ENCODE measurements at regions of chr1 and their contacts with region 1.

Region 1: DNA sequence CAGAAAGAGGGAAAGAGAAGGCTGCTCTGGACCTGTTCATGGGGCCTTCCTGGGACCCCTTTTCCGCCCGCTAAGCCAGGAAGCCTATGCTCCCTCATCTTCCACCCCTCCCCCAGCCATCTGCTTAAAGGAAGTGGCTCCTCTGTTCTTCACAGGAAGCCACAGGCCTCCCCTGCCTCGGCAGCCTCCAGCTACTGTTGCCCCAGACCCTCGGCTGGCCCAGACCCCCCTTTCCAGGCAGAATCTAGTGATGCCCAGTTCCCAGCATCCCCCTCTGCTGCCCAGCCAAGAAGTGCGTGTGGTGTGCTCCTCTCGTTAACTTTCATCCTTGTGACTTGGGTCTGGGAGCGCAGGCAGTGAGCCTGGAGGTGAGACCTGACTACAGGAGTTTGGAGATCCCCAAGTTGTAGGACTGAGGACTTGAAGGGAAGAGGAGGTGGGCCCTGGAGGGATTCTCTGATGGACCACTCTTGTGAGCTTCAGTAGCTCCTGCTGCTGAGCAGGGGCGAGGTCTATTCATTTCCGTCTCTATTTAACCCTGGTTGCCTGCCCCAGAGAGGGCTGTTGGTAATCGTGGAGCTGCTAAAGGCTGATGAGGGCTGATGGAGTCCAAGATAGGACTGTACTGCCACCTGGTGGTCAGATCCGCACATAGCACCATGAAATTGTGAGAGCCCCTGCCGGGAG is 9.1 kb downstream of the IFI6 start:
- DNase-seq: peak; percentile 76 to 94 (median 88)
- ATAC-seq: peak; percentile 80
- H3K4me3 ChIP-seq: peak overlapping the region; percentile 64
- H3K4me3 Mint-ChIP-seq: peak overlapping the region; percentile 82 to 94 (median 90)
- H3K27ac ChIP-seq: peak overlapping the region; percentile 81
- H3K27ac Mint-ChIP-seq: peak overlapping the region; percentile 95 to 100 (median 98)
- H3K4me1 ChIP-seq: peaks cover 38 to 46% of the 10 kb centered on the region in 2 donors
- H3K4me1 Mint-ChIP-seq: peaks cover 39 to 62% (median 48%) of the 10 kb centered on the region in 7 donors
- H3K27me3 ChIP-seq: no peaks in the 10 kb centered on the region
- H3K27me3 Mint-ChIP-seq: no peaks in the 10 kb centered on the region

Region 2: DNA sequence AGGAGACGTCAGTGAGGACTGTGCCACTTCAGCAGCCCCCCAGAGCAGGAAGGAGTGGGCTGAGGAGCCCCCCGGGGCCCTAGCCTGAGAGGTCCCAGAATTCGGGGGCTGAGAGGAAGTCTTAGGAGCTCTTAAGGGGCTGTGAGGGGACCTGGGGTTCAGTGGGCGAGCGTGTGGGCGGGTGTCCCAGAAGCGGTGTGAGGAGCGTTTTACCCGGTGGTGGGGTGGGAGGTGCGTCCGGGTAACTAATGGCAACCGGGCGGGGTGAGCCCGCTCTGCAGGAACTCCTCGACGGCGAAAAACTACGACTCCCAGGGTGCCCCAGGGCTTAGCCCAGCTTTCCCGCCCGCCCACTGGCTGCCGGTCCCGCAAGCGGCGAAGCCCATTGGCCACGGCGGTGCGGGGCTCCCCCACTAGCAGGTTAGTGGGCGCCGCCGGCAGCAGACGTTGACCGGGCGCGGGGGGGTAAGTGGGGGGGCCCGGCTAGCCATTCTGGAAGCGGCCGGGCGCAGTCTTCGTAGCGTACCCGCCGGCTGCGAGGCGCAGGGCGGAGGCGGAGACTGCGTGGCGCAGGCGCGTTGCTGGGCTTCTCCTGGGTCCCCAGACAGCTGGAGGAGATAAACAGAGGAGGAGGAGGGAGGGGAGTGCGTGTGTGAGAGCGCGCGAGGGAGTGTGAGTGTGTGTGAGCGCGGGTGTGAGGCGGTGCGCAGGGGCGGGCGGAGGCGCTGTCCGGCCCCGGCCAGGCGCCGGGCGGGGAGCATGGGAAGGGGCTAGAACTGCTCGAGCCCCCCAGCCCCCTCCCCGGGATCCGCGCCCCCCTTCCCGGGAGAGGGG is 428.6 kb before region 1 on chr1 and contains the start of gene WDTC1:
- CTCF ChIA-PET with region 1: no interaction called
- POLR2A ChIA-PET with region 1: no interaction called
- intact Hi-C with region 1: loop called in 1 of 2 experiments (anchors 10 kb)
- DNase-seq: peak; percentile 91 to 98 (median 97)
- ATAC-seq: peak; percentile 96
- H3K4me3 ChIP-seq: peak within 1 kb of the TSS; percentile 78
- H3K4me3 Mint-ChIP-seq: peak within 1 kb of the TSS; percentile 95 to 100 (median 98)
- H3K27ac ChIP-seq: peak within 1 kb of the TSS; percentile 78
- H3K27ac Mint-ChIP-seq: peak within 1 kb of the TSS; percentile 83 to 97 (median 96)
- H3K4me1 ChIP-seq: peaks cover 18 to 25% of the 10 kb centered on the region in 2 donors
- H3K4me1 Mint-ChIP-seq: peaks cover 25 to 39% (median 35%) of the 10 kb centered on the region in 7 donors
- H3K27me3 ChIP-seq: no peaks in the 10 kb centered on the region
- H3K27me3 Mint-ChIP-seq: peaks cover 0 to 3% (median 0%) of the 10 kb centered on the region in 5 donors
- total RNA-seq, gene WDTC1: 33.2 to 59.0 (median 46.3) TPM

Region 3: GRCh38 chr1:27392096-27392777 is 270.6 kb before region 1 on chr1 and contains the start of gene GPR3:
- CTCF ChIA-PET with region 1: interaction called, 7 read pairs
- POLR2A ChIA-PET with region 1: interaction called, 3 read pairs
- intact Hi-C with region 1: loop called (anchors 1 to 2 kb)
- DNase-seq: peak; percentile 82 to 95 (median 88)
- ATAC-seq: peak; percentile 97
- H3K4me3 ChIP-seq: peak within 1 kb of the TSS; percentile 57
- H3K4me3 Mint-ChIP-seq: peak within 1 kb of the TSS; percentile 76 to 90 (median 83)
- H3K27ac ChIP-seq: peak within 1 kb of the TSS; percentile 64
- H3K27ac Mint-ChIP-seq: peak within 1 kb of the TSS; percentile 54 to 98 (median 84)
- H3K4me1 ChIP-seq: peaks cover 9 to 18% of the 10 kb centered on the region in 2 donors
- H3K4me1 Mint-ChIP-seq: peaks cover 12 to 27% (median 20%) of the 10 kb centered on the region in 7 donors
- H3K27me3 ChIP-seq: no peaks in the 10 kb centered on the region
- H3K27me3 Mint-ChIP-seq: peaks cover 0 to 16% (median 0%) of the 10 kb centered on the region in 5 donors
- total RNA-seq, gene GPR3: 0.24 to 0.93 (median 0.45) TPM in 3 of 5 experiments, not detected in the others

Region 4: GRCh38 chr1:27489910-27490741 is 172.7 kb before region 1 on chr1 and contains the start of gene WASF2:
- CTCF ChIA-PET with region 1: no interaction called
- POLR2A ChIA-PET with region 1: interaction called, 6 read pairs
- intact Hi-C with region 1: loop called in 1 of 2 experiments (anchors 1 kb)
- DNase-seq: peak; percentile 91 to 99 (median 97)
- ATAC-seq: peak; percentile 98
- H3K4me3 ChIP-seq: peak within 1 kb of the TSS; percentile 100
- H3K4me3 Mint-ChIP-seq: peak within 1 kb of the TSS; percentile 89 to 99 (median 96)
- H3K27ac ChIP-seq: peak within 1 kb of the TSS; percentile 88
- H3K27ac Mint-ChIP-seq: peak within 1 kb of the TSS; percentile 97 to 100 (median 99)
- H3K4me1 ChIP-seq: peaks cover 14 to 19% of the 10 kb centered on the region in 2 donors
- H3K4me1 Mint-ChIP-seq: peaks cover 21 to 46% (median 42%) of the 10 kb centered on the region in 7 donors
- H3K27me3 ChIP-seq: no peaks in the 10 kb centered on the region
- H3K27me3 Mint-ChIP-seq: no peaks in the 10 kb centered on the region
- total RNA-seq, gene WASF2: 136 to 177 (median 145) TPM

Region 5: DNA sequence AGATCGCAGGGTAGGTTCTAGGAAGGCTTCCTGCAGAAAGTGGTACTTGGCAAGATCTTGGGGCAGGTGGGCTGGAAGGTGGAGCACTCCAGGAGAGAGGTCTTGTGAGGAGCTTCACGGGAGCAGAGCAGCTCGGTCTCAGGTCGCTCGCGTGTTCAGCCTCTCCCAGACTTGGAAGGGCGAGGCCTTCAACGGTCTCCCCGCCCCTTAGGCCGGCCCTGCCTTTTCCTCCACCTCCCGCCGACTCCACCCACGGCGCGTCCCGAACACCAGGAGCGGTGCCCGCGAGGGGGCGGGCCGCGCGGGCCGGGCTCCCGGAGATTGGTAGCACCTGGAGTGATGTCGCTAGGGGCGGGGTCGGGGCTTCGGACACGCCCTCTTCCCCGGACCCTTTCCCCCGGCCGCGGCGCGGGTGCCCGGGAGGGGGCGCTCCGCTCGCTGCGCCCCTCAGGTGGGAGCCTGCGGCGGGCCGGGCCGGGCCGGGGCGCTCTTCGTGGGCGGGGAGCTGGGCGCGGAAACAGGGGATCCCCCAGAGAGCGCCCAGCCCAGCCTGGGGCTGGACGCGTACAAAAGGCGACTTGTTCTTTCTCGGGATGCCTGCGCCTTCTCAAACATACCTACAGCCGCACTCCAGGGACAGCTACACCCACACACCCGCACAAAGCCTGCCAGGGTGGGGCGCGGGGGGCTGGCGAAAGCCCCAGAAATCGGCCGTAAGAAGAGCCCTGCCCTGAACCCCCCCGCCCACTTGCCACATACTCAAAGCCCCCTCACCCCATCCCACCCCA is 94.4 kb before region 1 on chr1:
- CTCF ChIA-PET with region 1: interaction called, 5 read pairs
- POLR2A ChIA-PET with region 1: no interaction called
- intact Hi-C with region 1: loop called (anchors 1 kb)
- DNase-seq: peak; percentile 87 to 96 (median 91)
- ATAC-seq: peak; percentile 96
- H3K4me3 ChIP-seq: peak overlapping the region; percentile 51
- H3K4me3 Mint-ChIP-seq: peak overlapping the region; percentile 55 to 88 (median 78)
- H3K27ac ChIP-seq: peak overlapping the region; percentile 68
- H3K27ac Mint-ChIP-seq: peak overlapping the region; percentile 64 to 93 (median 83)
- H3K4me1 ChIP-seq: peaks cover 7 to 19% of the 10 kb centered on the region in 2 donors
- H3K4me1 Mint-ChIP-seq: peaks cover 15 to 57% (median 51%) of the 10 kb centered on the region in 7 donors
- H3K27me3 ChIP-seq: no peaks in the 10 kb centered on the region
- H3K27me3 Mint-ChIP-seq: no peaks in the 10 kb centered on the region

Region 6: DNA sequence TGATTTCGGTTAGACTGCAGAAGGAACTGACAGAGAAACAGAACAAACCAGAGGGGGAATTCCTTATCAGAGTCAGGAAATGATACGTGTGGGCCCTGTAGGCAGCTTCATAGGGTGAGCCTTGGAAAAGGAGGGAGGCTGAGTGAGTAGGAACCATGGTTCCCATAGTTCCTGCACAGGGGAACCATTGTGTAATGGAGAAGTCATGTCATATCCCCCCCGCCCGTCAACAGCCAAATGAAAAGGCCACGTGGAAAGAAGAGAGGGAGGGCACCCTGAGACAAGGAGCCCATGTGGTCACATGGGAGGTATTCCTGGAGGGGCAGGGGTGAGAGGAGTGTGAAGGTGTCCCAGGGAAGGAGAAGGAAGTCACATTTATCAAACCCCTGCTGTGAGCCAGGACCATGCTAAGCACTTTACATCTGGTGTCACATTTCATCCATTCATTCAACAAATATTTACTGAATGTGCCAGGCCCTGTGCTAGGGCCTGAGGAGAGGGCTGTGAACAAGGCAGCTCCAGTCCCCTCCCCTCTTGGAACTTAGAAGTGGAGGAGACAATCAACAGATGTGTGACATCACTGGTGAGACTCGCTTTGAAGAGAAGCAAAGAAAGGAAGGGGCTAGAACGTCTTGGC is 12.2 kb before region 1 on chr1:
- CTCF ChIA-PET with region 1: interaction called, 109 read pairs
- POLR2A ChIA-PET with region 1: interaction called, 57 read pairs
- intact Hi-C with region 1: no loop called
- DNase-seq: no peak
- ATAC-seq: peak; percentile 78
- H3K4me3 ChIP-seq: no peak overlapping the region
- H3K4me3 Mint-ChIP-seq: peak overlapping the region in 1 of 10 donors; percentile 12
- H3K27ac ChIP-seq: no peak overlapping the region
- H3K27ac Mint-ChIP-seq: peak overlapping the region in 6 of 9 donors; percentile 42 to 85 (median 62)
- H3K4me1 ChIP-seq: no peaks in the 10 kb centered on the region
- H3K4me1 Mint-ChIP-seq: peaks cover 10 to 45% (median 20%) of the 10 kb centered on the region in 7 donors
- H3K27me3 ChIP-seq: no peaks in the 10 kb centered on the region
- H3K27me3 Mint-ChIP-seq: no peaks in the 10 kb centered on the region

Region 7: GRCh38 chr1:27804791-27805190 is 141.9 kb after region 1 on chr1:
- CTCF ChIA-PET with region 1: no interaction called
- POLR2A ChIA-PET with region 1: no interaction called
- intact Hi-C with region 1: no loop called
- DNase-seq: no peak
- ATAC-seq: no peak
- H3K4me3 ChIP-seq: no peak overlapping the region
- H3K4me3 Mint-ChIP-seq: no peak overlapping the region
- H3K27ac ChIP-seq: no peak overlapping the region
- H3K27ac Mint-ChIP-seq: peak overlapping the region in 1 of 9 donors; percentile 20
- H3K4me1 ChIP-seq: no peaks in the 10 kb centered on the region
- H3K4me1 Mint-ChIP-seq: no peaks in the 10 kb centered on the region
- H3K27me3 ChIP-seq: no peaks in the 10 kb centered on the region
- H3K27me3 Mint-ChIP-seq: no peaks in the 10 kb centered on the region

Region 8: DNA sequence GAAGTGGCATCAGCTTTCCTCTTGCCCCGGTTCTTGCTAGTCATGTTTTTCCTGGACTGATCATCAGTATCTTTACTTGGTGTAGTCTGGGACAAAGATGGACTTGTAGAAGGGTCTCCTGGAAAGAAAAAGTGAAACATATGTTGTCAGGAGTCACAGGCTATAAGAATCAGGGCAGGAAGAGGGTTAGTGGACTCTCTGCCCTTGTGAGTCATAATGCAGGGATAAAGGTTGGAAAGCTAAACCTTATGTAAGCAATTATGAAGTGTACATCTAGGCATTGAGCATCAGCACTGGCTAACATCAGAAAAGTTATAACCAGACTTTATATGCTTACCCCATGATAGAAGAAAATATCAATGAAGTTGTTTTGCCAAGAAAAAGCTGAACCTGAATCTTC is 348.1 kb after region 1 on chr1:
- CTCF ChIA-PET with region 1: no interaction called
- POLR2A ChIA-PET with region 1: no interaction called
- intact Hi-C with region 1: no loop called
- DNase-seq: no peak
- ATAC-seq: no peak
- H3K4me3 ChIP-seq: no peak overlapping the region
- H3K4me3 Mint-ChIP-seq: no peak overlapping the region
- H3K27ac ChIP-seq: no peak overlapping the region
- H3K27ac Mint-ChIP-seq: no peak overlapping the region
- H3K4me1 ChIP-seq: no peaks in the 10 kb centered on the region
- H3K4me1 Mint-ChIP-seq: no peaks in the 10 kb centered on the region
- H3K27me3 ChIP-seq: no peaks in the 10 kb centered on the region
- H3K27me3 Mint-ChIP-seq: no peaks in the 10 kb centered on the region

Region 9: GRCh38 chr1:28078680-28079626 is 416.1 kb after region 1 on chr1:
- CTCF ChIA-PET with region 1: no interaction called
- POLR2A ChIA-PET with region 1: no interaction called
- intact Hi-C with region 1: no loop called
- DNase-seq: no peak
- ATAC-seq: no peak
- H3K4me3 ChIP-seq: no peak overlapping the region
- H3K4me3 Mint-ChIP-seq: no peak overlapping the region
- H3K27ac ChIP-seq: no peak overlapping the region
- H3K27ac Mint-ChIP-seq: no peak overlapping the region
- H3K4me1 ChIP-seq: no peaks in the 10 kb centered on the region
- H3K4me1 Mint-ChIP-seq: peaks cover 14 to 40% (median 25%) of the 10 kb centered on the region in 7 donors
- H3K27me3 ChIP-seq: no peaks in the 10 kb centered on the region
- H3K27me3 Mint-ChIP-seq: no peaks in the 10 kb centered on the region

Measured in naive thymus-derived CD4-positive, alpha-beta T cell (primary cell).